ENCODE measurements at regions of chr10 and their contacts with region 1.

Region 1: GRCh38 chr10:80177781-80178540 is 27.4 kb downstream of the ANXA11 start:
- DNase-seq: peak; percentile 76

Region 2: DNA sequence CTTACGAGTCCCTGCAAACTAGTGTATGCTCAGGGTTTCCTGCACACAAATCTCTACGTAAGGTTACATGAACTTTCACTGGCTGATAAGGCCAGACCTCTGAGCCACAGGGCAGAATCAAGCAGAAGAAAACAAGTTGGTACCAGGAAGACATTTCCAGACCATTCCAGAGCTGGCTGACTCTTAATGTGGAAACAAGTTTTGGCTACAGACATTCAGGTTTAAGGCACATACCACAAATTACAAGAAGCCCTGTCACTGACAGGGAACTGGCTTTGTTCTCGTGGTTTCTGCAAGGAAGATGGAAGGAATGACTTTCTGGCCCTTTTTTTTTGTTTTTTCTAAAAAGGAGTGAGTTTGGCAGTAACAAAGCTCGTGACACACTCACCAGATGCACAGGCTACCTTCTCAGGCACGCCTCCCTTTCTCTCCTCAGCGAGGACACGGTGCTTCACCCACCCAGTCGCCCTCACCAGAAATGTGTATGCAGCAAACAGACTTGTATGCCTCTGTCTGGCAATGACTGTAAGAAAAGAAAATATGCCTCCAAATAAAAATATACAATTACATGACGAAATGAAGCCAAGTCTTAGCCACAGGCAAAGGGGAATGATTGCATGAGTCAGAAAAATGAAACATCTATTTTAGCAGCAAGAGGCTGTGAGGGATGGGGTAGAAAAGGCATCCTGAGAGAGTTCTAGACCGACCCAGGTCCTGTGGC is 22.8 kb before region 1 on chr10:
- intact Hi-C with region 1: no loop called
- DNase-seq: no peak

Region 3: GRCh38 chr10:80191589-80192255 is 13.8 kb after region 1 on chr10:
- intact Hi-C with region 1: loop called (anchors 1 to 2 kb)
- DNase-seq: no peak